ENCODE measurements at regions of chr22 and their contacts with region 1.

Region 1: GRCh38 chr22:37267135-37267587 is 15.1 kb upstream of the CYTH4 start:
- DNase-seq: no peak
- H3K4me3 ChIP-seq: peak overlapping the region; percentile 52
- CTCF ChIP-seq: peak; percentile 89

Region 2: DNA sequence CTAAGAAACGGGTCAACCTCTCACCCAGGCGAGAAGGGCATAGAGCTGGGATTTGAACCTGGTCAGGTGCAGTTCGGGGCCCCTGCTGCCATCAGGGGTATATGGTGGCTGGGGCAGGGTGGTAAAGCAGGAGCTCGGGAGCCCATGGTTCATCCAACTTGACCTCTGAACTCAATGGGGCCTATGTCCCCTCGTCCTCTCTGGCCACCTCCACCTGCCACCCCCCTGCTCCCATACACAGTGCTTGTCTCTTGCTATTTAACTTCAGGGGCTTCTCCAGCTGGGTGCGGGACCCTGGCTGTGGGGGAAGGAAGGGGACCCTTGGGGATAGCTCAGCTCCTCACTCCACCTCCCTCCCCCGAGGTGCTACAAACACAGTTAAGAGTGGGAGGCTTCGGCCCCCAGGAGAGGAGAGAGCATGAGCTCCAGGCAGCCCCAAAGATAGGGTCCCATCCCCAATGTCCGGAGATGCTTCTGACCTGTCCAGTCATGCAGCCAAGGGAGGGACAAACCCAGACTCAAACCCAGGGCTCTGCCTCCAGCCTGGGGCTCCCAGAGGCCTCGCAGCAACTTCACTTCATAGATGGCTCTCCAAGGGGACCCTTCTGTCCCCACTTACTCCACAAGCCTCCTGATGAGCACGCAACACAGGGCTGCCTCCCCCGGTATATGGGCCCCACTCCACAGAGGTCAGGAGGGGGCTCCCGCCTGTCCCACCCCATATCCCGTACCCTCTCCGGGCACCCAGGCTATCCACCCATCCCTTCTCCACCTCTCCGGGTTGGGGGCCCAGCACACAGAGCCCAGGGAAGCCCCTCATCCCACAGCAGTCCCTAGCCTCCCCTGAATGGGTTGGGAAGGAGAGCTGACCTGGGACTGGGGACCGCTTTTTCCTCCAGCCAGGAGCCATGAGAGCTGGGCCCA is 118.2 kb before region 1 on chr22:
- CTCF ChIA-PET with region 1: no interaction called
- POLR2A ChIA-PET with region 1: no interaction called
- DNase-seq: no peak
- H3K4me3 ChIP-seq: no peak overlapping the region
- CTCF ChIP-seq: no peak

Region 3: DNA sequence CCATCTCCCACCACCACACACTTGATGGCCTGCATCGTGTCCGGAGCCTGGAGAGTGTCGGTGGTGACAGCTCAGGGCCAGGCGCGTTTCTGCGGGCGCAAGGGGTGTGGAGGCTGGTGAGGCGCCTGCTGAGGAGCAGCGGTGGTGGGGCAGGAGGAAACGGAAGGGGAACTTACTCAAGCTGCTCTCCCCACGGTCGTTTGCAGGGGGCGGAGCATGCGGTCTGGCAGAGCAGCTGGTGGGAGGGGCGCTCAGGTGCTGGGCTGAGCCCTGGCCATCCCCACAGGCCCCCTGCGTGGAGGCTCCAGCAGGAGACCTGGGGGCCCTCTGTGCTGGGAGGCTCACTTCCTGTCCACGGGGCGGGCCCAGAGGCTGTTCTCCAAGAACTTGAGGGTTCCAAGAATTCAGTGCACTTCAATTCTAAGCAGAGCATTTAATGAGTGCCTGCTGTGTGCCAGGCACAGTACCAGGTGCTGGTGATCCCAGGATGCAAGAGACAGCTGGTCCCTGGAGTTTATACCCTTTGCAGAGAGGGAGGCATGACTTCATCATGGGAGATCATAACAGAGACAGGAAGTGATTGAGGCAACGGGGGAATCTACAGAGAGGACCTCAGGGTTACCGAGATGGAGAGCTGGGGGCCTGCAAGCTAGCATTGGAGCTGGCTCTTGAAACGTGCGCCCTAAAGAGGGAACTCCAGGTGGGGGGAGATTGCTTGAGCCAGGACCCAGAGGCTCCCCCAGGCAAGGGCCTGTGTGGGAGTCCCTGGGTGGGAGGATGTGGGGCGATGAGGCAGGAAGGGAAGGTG is 22.8 kb before region 1 on chr22 and contains the start of gene RAC2:
- CTCF ChIA-PET with region 1: interaction called, 162 read pairs
- POLR2A ChIA-PET with region 1: no interaction called
- DNase-seq: no peak
- H3K4me3 ChIP-seq: peak within 1 kb of the TSS; percentile 60
- CTCF ChIP-seq: no peak

Region 4: GRCh38 chr22:37282385-37282677 is 15.2 kb after region 1 on chr22 and contains the start of gene CYTH4:
- CTCF ChIA-PET with region 1: interaction called, 89 read pairs
- POLR2A ChIA-PET with region 1: no interaction called
- DNase-seq: no peak
- H3K4me3 ChIP-seq: no peak within 1 kb of the TSS
- CTCF ChIP-seq: no peak

Region 5: GRCh38 chr22:37457093-37457893 is 190.1 kb after region 1 on chr22:
- CTCF ChIA-PET with region 1: interaction called, 81 read pairs
- POLR2A ChIA-PET with region 1: no interaction called
- DNase-seq: no peak
- H3K4me3 ChIP-seq: no peak overlapping the region
- CTCF ChIP-seq: peak; percentile 90